Activated naive CD4-positive, alpha-beta T cell treated with anti-CD3 and anti-CD28 coated beads for 36 hours (primary cell): ENCODE measurements at regions of chr9 and their contacts with region 1.

Region 1: DNA sequence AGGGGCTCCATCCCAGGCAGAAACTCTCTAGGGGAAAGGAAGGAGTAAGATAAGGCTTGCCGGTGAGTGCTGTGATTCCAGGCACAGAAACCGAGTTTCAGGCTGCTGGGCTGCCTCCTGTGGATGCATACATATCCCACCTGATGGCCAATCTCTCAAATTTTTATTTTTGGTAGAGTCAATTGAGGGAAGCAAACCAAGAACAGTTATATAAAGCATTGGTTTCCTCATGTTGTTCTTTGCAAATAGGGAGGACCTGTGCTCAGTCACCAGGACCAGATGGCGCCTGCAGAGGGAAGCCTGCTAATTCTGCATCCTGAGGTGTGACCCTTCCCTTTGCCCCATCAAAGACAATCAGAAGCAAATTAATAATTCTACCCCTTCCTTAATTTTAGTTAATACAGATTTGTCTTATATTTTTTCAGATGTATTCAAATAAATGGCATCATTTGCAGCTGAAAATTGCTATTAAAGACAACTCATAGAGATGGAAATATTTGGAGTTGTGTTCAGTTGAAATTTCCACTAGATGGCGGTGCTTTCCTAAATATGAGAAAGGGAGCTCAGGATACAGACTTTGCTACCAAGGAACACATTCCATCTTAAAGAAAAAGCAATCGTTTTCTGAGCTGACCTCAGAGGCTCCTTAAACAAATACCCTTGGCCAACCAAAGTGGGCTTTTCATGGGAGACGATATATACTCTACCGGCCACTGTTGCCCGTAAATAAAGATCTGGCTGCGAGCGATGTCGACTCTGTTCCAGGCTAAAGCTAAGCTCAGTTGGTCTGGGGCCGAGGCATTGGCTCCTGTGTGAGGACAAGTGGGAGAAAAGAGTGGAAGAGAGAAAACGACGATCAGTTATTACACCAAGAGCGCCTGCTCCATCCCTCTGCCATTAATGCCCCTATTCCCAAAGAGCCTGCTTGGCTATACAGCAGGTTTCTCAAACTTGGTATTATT is 225.7 kb upstream of the KLF9 start:
- DNase-seq: peak; percentile 9
- H3K4me3 Mint-ChIP-seq: no peak overlapping the region
- H3K27ac Mint-ChIP-seq: no peak overlapping the region
- H3K4me1 Mint-ChIP-seq: no peaks in the 10 kb centered on the region
- H3K27me3 Mint-ChIP-seq: peaks cover 10% of the 10 kb centered on the region

Region 2: GRCh38 chr9:70924895-70925547 is 284.9 kb after region 1 on chr9:
- CTCF ChIA-PET with region 1: no interaction called
- intact Hi-C with region 1: loop called (anchors 10 kb)
- DNase-seq: peak; percentile 27
- H3K4me3 Mint-ChIP-seq: no peak overlapping the region
- H3K27ac Mint-ChIP-seq: no peak overlapping the region
- H3K4me1 Mint-ChIP-seq: no peaks in the 10 kb centered on the region
- H3K27me3 Mint-ChIP-seq: no peaks in the 10 kb centered on the region

Region 3: DNA sequence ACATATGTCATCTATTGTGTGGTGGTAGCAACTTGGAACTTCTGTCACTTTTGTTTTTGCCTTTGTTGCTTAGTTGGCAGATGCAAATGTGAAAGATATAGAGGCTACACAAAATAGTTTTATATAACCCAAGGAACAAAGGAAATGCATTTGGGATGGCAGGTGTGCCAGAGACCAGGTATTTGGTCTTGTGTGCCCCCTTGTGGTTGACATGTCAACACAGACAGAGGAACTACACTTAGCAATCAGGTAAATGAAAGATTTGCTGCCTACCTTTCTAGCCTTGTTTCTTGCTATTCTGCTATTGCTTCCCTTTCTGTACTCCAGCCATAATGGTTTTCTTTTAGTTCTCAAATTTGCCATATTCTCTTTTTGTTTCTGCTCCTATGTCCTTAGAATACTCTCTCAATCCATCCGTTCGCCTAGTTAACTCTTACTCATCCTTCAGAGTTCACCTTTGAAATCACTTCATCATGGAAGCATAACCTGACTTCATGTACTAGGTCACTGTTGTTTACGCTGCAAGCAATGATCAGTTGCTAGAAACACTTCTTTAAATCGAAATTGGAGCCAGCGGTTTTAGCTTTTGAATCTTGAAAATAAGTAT is 361.7 kb after region 1 on chr9:
- CTCF ChIA-PET with region 1: interaction called, 4 read pairs
- intact Hi-C with region 1: loop called (anchors 1 kb)
- DNase-seq: peak; percentile 19
- H3K4me3 Mint-ChIP-seq: no peak overlapping the region
- H3K27ac Mint-ChIP-seq: no peak overlapping the region
- H3K4me1 Mint-ChIP-seq: no peaks in the 10 kb centered on the region
- H3K27me3 Mint-ChIP-seq: no peaks in the 10 kb centered on the region

Region 4: GRCh38 chr9:71249729-71250317 is 609.7 kb after region 1 on chr9:
- CTCF ChIA-PET with region 1: interaction called, 3 read pairs
- intact Hi-C with region 1: loop called (anchors 1 kb)
- DNase-seq: no peak
- H3K4me3 Mint-ChIP-seq: no peak overlapping the region
- H3K27ac Mint-ChIP-seq: no peak overlapping the region
- H3K4me1 Mint-ChIP-seq: no peaks in the 10 kb centered on the region
- H3K27me3 Mint-ChIP-seq: peaks cover 23% of the 10 kb centered on the region

Region 5: GRCh38 chr9:71285191-71285656 is 645.1 kb after region 1 on chr9:
- CTCF ChIA-PET with region 1: interaction called, 3 read pairs
- intact Hi-C with region 1: loop called (anchors 1 kb)
- DNase-seq: peak; percentile 58
- H3K4me3 Mint-ChIP-seq: no peak overlapping the region
- H3K27ac Mint-ChIP-seq: no peak overlapping the region
- H3K4me1 Mint-ChIP-seq: no peaks in the 10 kb centered on the region
- H3K27me3 Mint-ChIP-seq: peaks cover 7% of the 10 kb centered on the region